ENCODE measurements at regions of chr9 and their contacts with region 1.

Region 1: GRCh38 chr9:125407974-125408900 is 146.6 kb downstream of the GAPVD1 start:
- DNase-seq: peak; percentile 75 to 85 (median 83)
- ATAC-seq: peak; percentile 87
- H3K4me3 ChIP-seq: no peak overlapping the region
- H3K4me1 ChIP-seq: peaks cover 4% of the 10 kb centered on the region
- CTCF ChIP-seq: peak; percentile 68

Region 2: DNA sequence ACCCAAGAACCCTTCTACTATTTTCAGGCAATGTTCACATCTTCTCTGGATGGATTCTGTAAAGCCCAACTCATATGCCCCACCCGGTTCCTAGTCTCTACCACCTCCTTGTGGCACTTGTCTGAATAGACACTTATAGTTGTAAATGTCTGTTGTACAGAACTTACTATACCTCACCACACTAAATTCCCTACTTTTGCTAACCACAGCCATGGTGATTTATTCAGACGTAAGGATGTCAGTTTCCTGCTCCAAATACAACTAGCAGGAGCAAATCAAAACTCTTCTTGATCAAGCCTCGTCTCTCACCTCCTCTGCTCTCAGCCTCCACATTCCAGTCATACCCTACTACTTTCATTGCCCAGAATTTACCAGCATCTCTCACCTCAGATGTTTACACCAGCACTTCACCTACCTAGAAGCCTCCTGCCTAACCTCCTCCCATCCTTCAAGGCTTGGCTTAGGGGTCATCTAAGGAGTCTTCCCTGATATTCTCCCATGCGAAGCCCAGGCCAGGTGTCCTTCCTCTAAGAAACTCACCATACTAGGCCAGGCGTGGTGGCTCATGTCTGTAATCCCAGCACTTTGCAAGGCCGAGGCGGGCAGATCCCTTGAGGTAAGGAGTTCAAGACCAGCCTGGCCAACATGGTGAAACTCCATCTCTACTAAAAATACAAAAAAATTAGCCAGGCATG is 223.3 kb after region 1 on chr9:
- intact Hi-C with region 1: loop called (anchors 5 to 10 kb)
- DNase-seq: peak in 1 of 3 donors; percentile 66
- ATAC-seq: peak; percentile 84
- H3K4me3 ChIP-seq: no peak overlapping the region
- H3K4me1 ChIP-seq: peaks cover 17% of the 10 kb centered on the region
- CTCF ChIP-seq: peak; percentile 9

Region 3: GRCh38 chr9:125746017-125746773 is 338.0 kb after region 1 on chr9:
- intact Hi-C with region 1: loop called in 1 of 2 experiments (anchors 10 kb)
- DNase-seq: peak; percentile 96
- ATAC-seq: peak; percentile 96
- H3K4me3 ChIP-seq: peak overlapping the region; percentile 30
- H3K4me1 ChIP-seq: peaks cover 14% of the 10 kb centered on the region
- CTCF ChIP-seq: no peak

Region 4: GRCh38 chr9:126228781-126229444 is 820.7 kb after region 1 on chr9:
- intact Hi-C with region 1: loop called (anchors 10 kb)
- DNase-seq: peak in 2 of 3 donors; percentile 78 to 80
- ATAC-seq: peak; percentile 92
- H3K4me3 ChIP-seq: no peak overlapping the region
- H3K4me1 ChIP-seq: no peaks in the 10 kb centered on the region
- CTCF ChIP-seq: peak; percentile 85

Region 5: DNA sequence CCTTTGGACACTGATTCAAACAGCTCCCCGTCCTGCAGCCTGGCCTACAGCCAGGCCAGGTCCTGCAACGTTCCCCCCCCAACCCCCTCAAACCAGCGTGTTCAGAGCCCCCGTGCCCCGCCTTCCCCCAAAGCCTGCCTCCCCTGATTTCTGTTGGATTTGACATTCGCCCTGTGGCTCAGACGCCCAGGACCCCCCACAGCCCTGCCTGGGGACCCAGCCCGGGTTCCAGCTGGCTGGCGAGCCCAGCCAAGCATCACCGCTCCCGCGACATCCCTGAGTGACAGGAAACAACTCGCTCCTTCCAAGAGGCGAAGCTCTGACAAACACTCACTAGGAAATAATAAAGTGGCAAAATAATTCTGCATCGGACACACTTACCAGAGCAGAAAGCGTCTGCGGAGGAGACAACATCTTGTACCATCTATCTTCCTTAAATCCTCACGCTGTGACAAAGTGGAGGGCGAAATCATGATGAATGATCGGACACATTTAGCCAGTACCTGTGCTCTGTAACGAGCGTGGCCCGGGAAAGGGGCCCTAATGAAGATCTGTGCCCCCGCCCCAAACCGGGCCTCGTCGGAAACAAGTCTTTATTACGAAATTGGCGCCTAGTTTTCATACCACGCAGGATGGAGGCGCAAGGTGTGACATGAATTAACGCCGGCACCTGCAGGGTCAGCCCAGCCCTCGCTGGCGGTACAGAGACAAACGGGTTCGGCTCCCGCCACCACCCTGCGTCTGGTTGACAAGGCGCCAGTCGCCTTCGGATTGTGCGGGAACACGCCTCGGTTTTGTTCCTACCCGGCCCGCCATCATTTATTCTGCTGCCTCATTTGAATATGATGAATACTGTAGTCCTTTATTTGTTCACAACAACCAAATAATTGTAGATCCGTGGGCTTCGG is 827.4 kb after region 1 on chr9:
- intact Hi-C with region 1: loop called in 1 of 2 experiments (anchors 10 kb)
- DNase-seq: no peak
- ATAC-seq: no peak
- H3K4me3 ChIP-seq: no peak overlapping the region
- H3K4me1 ChIP-seq: no peaks in the 10 kb centered on the region
- CTCF ChIP-seq: no peak